Left lung (tissue), 14 donors: ENCODE measurements at regions of chr2 and their contacts with region 1.

Region 1: DNA sequence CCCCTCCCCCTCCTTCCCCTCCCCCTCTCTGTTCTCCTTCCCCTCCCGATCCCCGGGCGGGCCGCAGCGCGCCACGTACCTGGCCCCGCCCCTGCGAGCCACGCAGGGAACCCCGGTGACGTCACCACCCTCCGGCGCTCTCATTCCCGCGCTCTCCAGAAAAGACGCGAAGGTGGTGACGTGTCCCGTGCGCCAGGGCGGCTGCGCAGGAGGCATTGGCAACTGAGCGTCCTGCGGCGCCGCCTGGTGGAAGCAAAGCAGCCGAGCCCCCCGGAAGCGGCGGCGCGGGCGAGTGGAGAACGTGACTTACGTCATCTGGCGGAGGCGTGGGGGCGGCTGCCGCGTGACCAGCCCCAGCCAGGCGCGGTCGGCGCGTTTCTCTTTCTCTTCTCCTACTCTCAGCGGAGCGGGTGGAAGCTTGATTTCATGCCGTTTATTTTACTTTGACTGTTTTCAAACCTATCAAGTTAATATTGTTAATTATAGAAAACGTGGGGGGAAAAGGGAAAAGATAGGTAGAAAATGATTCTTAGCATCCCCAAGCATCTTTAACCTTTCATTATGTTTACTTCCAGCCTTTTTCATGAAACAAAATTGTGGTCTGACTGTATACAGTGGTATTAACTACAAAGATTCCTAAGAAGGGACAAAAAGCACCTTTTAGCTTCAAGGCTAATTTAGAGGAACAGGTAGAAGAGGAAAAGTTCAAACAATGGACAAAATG is 48.1 kb downstream of the C2orf42 start:
- DNase-seq: peak; percentile 99 to 100 (median 100)
- ATAC-seq: peak; percentile 81
- H3K4me3 ChIP-seq: peak overlapping the region; percentile 24 to 50
- H3K27ac ChIP-seq: peak overlapping the region; percentile 99 to 100
- H3K4me1 ChIP-seq: peaks cover 10 to 35% of the 10 kb centered on the region in 2 donors
- H3K27me3 ChIP-seq: no peaks in the 10 kb centered on the region
- CTCF ChIP-seq: peak; percentile 81 to 98

Region 2: GRCh38 chr2:69914170-69914960 is 228.4 kb before region 1 on chr2:
- intact Hi-C with region 1: loop called in 1 of 2 experiments (anchors 5 kb)
- DNase-seq: peak; percentile 99 to 100 (median 100)
- ATAC-seq: peak; percentile 91
- H3K4me3 ChIP-seq: peak overlapping the region; percentile 56 to 90
- H3K27ac ChIP-seq: peak overlapping the region; percentile 98 to 99
- H3K4me1 ChIP-seq: peaks cover 12 to 58% of the 10 kb centered on the region in 2 donors
- H3K27me3 ChIP-seq: no peaks in the 10 kb centered on the region
- CTCF ChIP-seq: peak in 1 of 2 donors; percentile 23